ENCODE measurements at regions of chr2 and their contacts with region 1.

Region 1: GRCh38 chr2:29650631-29651097 is 270.7 kb downstream of the ALK start:
- DNase-seq: no peak
- ATAC-seq: no peak
- H3K4me3 ChIP-seq: no peak overlapping the region
- H3K27ac ChIP-seq: no peak overlapping the region
- H3K4me1 ChIP-seq: no peaks in the 10 kb centered on the region
- CTCF ChIP-seq: no peak
- EP300 ChIP-seq: no peak
- POLR2A ChIP-seq: no peak
- RAD21 ChIP-seq: no peak

Region 2: DNA sequence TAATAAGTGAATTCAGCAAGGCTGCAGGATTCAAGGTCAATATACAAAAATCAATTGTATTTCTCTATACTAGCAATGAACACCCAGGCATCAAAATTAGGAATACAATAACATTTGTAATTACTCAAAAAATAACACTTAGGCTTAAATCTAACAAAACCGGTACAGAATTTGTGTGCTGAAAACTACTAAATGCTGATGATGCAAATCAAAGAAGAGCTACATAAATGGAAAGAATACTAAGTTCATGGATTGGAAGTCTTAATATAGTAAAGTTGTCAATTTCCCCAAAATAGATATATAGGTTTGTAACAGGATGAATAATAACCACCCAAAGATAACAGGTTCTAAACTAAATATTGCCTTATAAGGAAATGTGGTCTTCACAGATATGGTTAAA is 15.7 kb before region 1 on chr2:
- CTCF ChIA-PET with region 1: no interaction called
- POLR2A ChIA-PET with region 1: no interaction called
- DNase-seq: no peak
- ATAC-seq: no peak
- H3K4me3 ChIP-seq: no peak overlapping the region
- H3K27ac ChIP-seq: no peak overlapping the region
- H3K4me1 ChIP-seq: no peaks in the 10 kb centered on the region
- CTCF ChIP-seq: no peak
- EP300 ChIP-seq: no peak
- POLR2A ChIP-seq: no peak
- RAD21 ChIP-seq: no peak

Region 3: DNA sequence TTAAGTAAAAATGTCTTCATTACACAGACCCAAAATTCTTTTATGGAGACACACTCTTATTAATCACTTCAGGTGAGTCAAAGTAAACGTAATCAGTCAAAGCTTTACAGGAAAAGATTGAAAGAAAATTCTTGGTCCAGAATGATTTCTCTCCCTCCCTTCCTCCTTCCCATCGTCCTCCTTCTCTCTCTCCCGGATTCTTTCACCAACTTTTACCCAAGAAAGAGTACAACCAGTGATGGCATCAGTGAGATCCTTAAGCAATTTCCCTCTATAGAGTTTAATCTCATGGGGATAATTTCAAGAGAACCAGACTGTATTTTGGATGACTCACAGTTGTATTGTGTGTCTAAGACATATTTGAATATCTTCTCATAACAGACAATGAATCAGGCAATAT is 12.6 kb after region 1 on chr2:
- CTCF ChIA-PET with region 1: interaction called, 11 read pairs
- POLR2A ChIA-PET with region 1: no interaction called
- DNase-seq: peak; percentile 43 to 65
- ATAC-seq: peak; percentile 89 to 92
- H3K4me3 ChIP-seq: no peak overlapping the region
- H3K27ac ChIP-seq: peak overlapping the region; percentile 5 to 25; a peak in 3 of 6 replicates
- H3K4me1 ChIP-seq: peaks cover 16% of the 10 kb centered on the region; the same call in 2 of the 3 replicates
- CTCF ChIP-seq: no peak
- EP300 ChIP-seq: no peak
- POLR2A ChIP-seq: no peak
- RAD21 ChIP-seq: no peak; a peak in 1 of 5 replicates

Measured in A549 (cell line).